AG04450 (cell line): ENCODE measurements at regions of chr11 and their contacts with region 1.

Region 1: GRCh38 chr11:122215244-122215992 is 99.4 kb upstream of the BLID start:
- DNase-seq: peak; percentile 94
- H3K4me3 ChIP-seq: no peak overlapping the region
- H3K27ac ChIP-seq: peak overlapping the region; percentile 77
- H3K27me3 ChIP-seq: no peaks in the 10 kb centered on the region
- CTCF ChIP-seq: peak; percentile 94

Region 2: GRCh38 chr11:122141725-122142124 is 73.7 kb before region 1 on chr11:
- CTCF ChIA-PET with region 1: no interaction called
- POLR2A ChIA-PET with region 1: no interaction called
- DNase-seq: no peak
- H3K4me3 ChIP-seq: no peak overlapping the region
- H3K27ac ChIP-seq: peak overlapping the region; percentile 55
- H3K27me3 ChIP-seq: no peaks in the 10 kb centered on the region
- CTCF ChIP-seq: no peak

Region 3: DNA sequence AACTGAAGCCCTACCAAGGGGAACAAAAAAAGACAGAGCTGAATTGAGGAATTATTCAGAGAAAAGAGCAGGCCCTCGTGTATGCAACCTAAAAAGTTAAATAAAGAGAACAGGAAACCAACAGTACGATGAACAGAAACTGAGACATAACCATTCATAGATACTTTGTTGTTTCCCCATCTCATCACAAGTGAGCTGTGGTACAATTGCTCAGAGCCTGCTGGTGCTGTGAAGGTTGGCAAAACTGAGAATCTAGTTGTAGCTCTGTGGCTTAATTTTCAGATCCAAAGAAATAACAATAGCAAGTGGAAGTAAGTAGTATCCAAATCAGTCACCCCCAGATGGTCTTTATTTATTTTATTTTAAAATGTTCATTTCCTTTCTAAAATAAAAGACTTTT is 61.7 kb before region 1 on chr11:
- CTCF ChIA-PET with region 1: interaction called, 3 read pairs
- POLR2A ChIA-PET with region 1: interaction called, 13 read pairs
- DNase-seq: no peak
- H3K4me3 ChIP-seq: no peak overlapping the region
- H3K27ac ChIP-seq: peak overlapping the region; percentile 39
- H3K27me3 ChIP-seq: no peaks in the 10 kb centered on the region
- CTCF ChIP-seq: no peak

Region 4: GRCh38 chr11:122226810-122227379 is 11.5 kb after region 1 on chr11:
- CTCF ChIA-PET with region 1: interaction called, 36 read pairs
- POLR2A ChIA-PET with region 1: interaction called, 4 read pairs
- DNase-seq: no peak
- H3K4me3 ChIP-seq: no peak overlapping the region
- H3K27ac ChIP-seq: no peak overlapping the region
- H3K27me3 ChIP-seq: no peaks in the 10 kb centered on the region
- CTCF ChIP-seq: no peak

Region 5: GRCh38 chr11:122235615-122236014 is 20.2 kb after region 1 on chr11:
- CTCF ChIA-PET with region 1: interaction called, 27 read pairs
- POLR2A ChIA-PET with region 1: interaction called, 9 read pairs
- DNase-seq: peak; percentile 94
- H3K4me3 ChIP-seq: no peak overlapping the region
- H3K27ac ChIP-seq: peak overlapping the region; percentile 74
- H3K27me3 ChIP-seq: no peaks in the 10 kb centered on the region
- CTCF ChIP-seq: no peak

Region 6: DNA sequence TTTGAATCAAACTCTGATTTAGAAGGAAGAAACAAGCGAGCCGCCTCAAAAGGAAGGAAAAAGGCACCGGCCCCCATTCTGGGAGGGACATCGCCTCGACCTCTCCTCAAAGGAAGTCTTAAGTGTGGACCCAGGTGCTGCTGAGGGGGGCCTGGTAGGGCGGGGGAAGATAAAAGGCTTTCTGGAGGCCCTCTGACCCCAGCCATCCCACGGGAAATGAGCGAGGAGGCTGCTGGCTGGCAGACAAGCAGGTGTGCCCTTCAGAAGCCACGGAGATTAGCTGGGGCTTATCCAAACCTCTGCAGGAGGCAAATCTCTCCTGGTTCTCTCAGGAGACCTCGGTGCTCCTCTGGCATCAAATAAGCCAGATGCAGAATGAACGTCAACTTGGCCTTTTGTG is 72.0 kb after region 1 on chr11:
- CTCF ChIA-PET with region 1: no interaction called
- POLR2A ChIA-PET with region 1: no interaction called
- DNase-seq: no peak
- H3K4me3 ChIP-seq: no peak overlapping the region
- H3K27ac ChIP-seq: no peak overlapping the region
- H3K27me3 ChIP-seq: no peaks in the 10 kb centered on the region
- CTCF ChIP-seq: no peak